Activated CD8-positive, alpha-beta T cell treated with anti-CD3 and anti-CD28 coated beads for 36 hours (primary cell): ENCODE measurements at regions of chr7 and their contacts with region 1.

Region 1: DNA sequence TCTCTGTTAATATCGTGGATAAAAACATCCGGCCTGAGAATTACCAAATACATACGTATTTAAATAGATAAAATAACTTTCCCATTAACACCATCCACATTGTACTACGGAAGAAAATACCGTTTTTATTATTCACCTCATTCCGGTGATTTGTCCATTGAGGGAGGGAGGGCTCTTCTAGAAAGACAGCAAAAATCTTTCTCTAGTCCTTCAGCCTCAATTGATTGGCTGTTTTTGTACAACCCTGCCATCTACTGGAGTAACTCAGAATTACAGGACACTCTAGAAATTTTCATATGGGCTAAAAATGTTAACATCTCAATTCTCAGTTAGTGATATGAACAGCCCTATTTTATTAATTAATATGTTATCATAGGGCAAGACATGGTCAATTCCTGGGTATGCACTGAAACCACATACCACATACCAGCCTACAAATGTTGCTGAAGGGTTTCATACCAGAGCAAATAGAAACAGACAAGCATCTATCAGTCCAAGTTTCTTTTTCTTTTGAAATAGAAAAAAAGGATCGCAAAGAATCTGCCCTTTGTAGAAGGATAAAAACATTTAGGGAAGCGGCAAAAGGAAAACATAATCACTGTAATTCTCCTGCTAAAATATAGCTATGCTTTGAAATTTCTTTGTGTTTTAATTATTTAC is 55.8 kb upstream of the CDCA7L start:
- DNase-seq: peak; percentile 6
- ATAC-seq: peak; percentile 80
- H3K4me3 Mint-ChIP-seq: no peak overlapping the region
- H3K27ac Mint-ChIP-seq: no peak overlapping the region
- H3K4me1 Mint-ChIP-seq: peaks cover 2% of the 10 kb centered on the region
- H3K27me3 Mint-ChIP-seq: no peaks in the 10 kb centered on the region
- CTCF ChIP-seq: peak; percentile 87

Region 2: DNA sequence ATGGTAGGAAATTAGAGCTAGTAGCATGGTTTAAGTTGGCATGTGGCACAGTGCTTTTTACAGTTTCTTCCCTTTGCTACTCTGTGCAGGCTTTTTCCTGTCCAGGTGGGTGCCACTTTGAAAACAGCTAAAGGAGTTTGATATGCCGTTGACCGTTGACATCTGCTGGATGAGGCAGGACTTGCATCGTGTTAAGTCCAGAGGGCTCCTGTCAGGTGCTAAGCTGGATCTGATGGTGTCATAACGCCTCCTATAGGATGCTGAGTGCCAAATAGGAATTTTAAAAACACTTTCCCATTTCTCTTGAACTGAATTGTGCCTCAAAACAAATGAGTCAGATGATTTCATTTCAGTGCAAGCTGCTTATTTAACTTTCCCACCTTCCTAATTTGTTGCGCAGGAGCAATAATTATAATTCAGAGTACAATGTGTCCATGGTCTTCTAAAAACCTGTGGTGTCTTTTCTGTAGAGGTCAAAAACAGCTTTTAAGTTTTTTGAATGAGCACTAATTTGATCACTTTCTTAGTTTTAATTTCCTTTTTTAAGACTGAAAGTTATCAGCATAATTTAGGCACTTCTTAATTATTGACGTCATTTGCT is 234.1 kb before region 1 on chr7:
- CTCF ChIA-PET with region 1: no interaction called
- POLR2A ChIA-PET with region 1: no interaction called
- intact Hi-C with region 1: loop called (anchors 10 kb)
- DNase-seq: peak; percentile 43
- ATAC-seq: peak; percentile 47
- H3K4me3 Mint-ChIP-seq: no peak overlapping the region
- H3K27ac Mint-ChIP-seq: no peak overlapping the region
- H3K4me1 Mint-ChIP-seq: peaks cover 10% of the 10 kb centered on the region
- H3K27me3 Mint-ChIP-seq: peaks cover 2% of the 10 kb centered on the region
- CTCF ChIP-seq: peak; percentile 35

Region 3: DNA sequence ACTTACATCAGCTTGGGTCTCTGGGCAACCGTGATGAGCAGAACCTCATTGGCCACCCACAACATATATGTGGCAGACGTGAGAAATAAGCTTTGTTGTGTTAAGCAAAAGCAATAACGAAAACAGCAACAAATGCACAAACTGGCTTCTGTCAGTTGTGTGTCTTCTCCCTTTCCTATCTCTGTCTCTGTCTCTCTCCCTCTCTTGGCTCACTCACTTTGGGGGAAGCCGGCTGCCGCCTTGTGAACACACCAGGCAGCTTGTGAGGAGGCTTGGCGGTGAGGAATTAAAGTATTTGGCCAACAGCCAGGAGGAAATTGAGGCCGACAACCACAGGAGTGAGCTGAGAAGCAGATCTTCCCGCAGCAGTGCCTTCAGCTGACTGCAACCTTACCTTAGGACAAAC is 33.9 kb before region 1 on chr7:
- CTCF ChIA-PET with region 1: interaction called, 15 read pairs
- POLR2A ChIA-PET with region 1: no interaction called
- intact Hi-C with region 1: no loop called
- DNase-seq: peak; percentile 38
- ATAC-seq: peak; percentile 24
- H3K4me3 Mint-ChIP-seq: no peak overlapping the region
- H3K27ac Mint-ChIP-seq: no peak overlapping the region
- H3K4me1 Mint-ChIP-seq: peaks cover 7% of the 10 kb centered on the region
- H3K27me3 Mint-ChIP-seq: peaks cover under 1% of the 10 kb centered on the region
- CTCF ChIP-seq: no peak